ENCODE measurements at regions of chr4 and their contacts with region 1.

Region 1: GRCh38 chr4:1346781-1347409 is at the start of gene UVSSA:
- DNase-seq: peak; percentile 100
- ATAC-seq: peak; percentile 94
- H3K4me3 Mint-ChIP-seq: peak within 1 kb of the TSS; percentile 85
- H3K27ac Mint-ChIP-seq: peak within 1 kb of the TSS; percentile 97
- H3K4me1 Mint-ChIP-seq: peaks cover 44% of the 10 kb centered on the region
- H3K27me3 Mint-ChIP-seq: no peaks in the 10 kb centered on the region
- total RNA-seq, gene UVSSA: 16.7 to 17.0 TPM

Region 2: GRCh38 chr4:1137063-1137776 is 209.7 kb before region 1 on chr4:
- CTCF ChIA-PET with region 1: interaction called, 13 read pairs
- POLR2A ChIA-PET with region 1: interaction called, 5 read pairs
- DNase-seq: no peak
- ATAC-seq: peak; percentile 64
- H3K4me3 Mint-ChIP-seq: peak overlapping the region; percentile 68
- H3K27ac Mint-ChIP-seq: peak overlapping the region; percentile 78
- H3K4me1 Mint-ChIP-seq: peaks cover 23% of the 10 kb centered on the region
- H3K27me3 Mint-ChIP-seq: peaks cover 12% of the 10 kb centered on the region

Region 3: DNA sequence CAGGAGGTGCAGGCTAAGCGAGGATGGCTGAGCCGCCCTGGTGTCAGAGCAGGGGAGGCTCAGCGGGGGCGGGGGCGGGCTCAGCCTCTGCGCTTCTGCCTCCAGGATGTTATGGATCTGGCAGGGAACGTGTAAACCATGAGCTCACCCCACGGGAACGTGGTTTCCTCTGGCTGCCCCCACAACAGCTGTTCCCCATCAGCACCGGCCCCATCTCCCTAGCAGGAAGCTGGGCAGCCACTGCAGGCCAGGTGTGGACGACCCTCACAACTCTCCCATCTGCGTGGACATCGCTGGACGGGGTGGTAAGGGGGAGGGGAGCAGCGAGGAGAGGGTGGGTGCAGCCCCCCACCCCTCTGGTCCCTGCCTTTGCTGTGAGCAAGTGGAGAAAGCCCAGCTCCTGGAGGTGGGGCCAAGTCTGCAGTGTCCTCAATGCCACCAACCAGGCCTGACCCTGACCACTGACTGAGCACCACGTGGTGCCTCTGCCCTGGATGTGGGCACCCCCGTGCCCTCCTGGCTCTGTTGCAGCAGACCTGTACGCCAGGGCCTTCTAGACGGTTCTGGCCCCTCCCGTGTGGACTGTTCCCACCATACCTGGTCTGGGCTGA is 146.4 kb before region 1 on chr4:
- CTCF ChIA-PET with region 1: interaction called, 3 read pairs
- POLR2A ChIA-PET with region 1: interaction called, 10 read pairs
- DNase-seq: peak; percentile 54
- ATAC-seq: peak; percentile 2
- H3K4me3 Mint-ChIP-seq: peak overlapping the region; percentile 82
- H3K27ac Mint-ChIP-seq: peak overlapping the region; percentile 99
- H3K4me1 Mint-ChIP-seq: peaks cover 60% of the 10 kb centered on the region
- H3K27me3 Mint-ChIP-seq: no peaks in the 10 kb centered on the region

Region 4: GRCh38 chr4:1266881-1267763 is 79.8 kb before region 1 on chr4:
- CTCF ChIA-PET with region 1: interaction called, 15 read pairs
- POLR2A ChIA-PET with region 1: interaction called, 4 read pairs
- DNase-seq: no peak
- ATAC-seq: peak; percentile 79
- H3K4me3 Mint-ChIP-seq: peak overlapping the region; percentile 70
- H3K27ac Mint-ChIP-seq: peak overlapping the region; percentile 95
- H3K4me1 Mint-ChIP-seq: peaks cover 20% of the 10 kb centered on the region
- H3K27me3 Mint-ChIP-seq: no peaks in the 10 kb centered on the region

Region 5: GRCh38 chr4:1309261-1310010 is 37.5 kb before region 1 on chr4:
- CTCF ChIA-PET with region 1: interaction called, 10 read pairs
- POLR2A ChIA-PET with region 1: interaction called, 6 read pairs
- DNase-seq: peak; percentile 77
- ATAC-seq: peak; percentile 87
- H3K4me3 Mint-ChIP-seq: peak overlapping the region; percentile 47
- H3K27ac Mint-ChIP-seq: peak overlapping the region; percentile 75
- H3K4me1 Mint-ChIP-seq: peaks cover 63% of the 10 kb centered on the region
- H3K27me3 Mint-ChIP-seq: no peaks in the 10 kb centered on the region

Region 6: DNA sequence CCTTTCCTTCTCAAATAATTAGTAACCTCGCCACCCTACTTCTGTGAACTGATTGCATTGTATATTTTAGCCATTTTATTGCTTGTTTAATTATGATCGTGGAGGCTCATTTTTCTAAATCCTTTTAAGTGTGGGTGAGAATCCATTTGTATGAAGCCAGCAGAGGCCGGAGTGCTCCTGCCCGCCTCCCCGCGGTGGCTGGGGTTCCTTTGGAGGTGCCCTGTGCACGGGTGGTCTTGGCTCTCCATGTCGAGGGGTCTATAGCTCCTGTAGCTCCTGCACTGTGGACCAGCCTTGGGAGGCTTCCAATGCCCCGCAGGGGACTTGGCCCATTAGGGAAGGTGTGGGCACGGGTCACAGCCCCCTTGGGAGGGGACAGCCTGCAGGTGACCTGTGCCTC is 15.2 kb after region 1 on chr4:
- CTCF ChIA-PET with region 1: no interaction called
- POLR2A ChIA-PET with region 1: no interaction called
- DNase-seq: no peak
- ATAC-seq: no peak
- H3K4me3 Mint-ChIP-seq: no peak overlapping the region
- H3K27ac Mint-ChIP-seq: no peak overlapping the region
- H3K4me1 Mint-ChIP-seq: no peaks in the 10 kb centered on the region
- H3K27me3 Mint-ChIP-seq: no peaks in the 10 kb centered on the region

Measured in activated CD8-positive, alpha-beta T cell treated with anti-CD3 and anti-CD28 coated beads, Interleukin-2, amount 10 ng/mL, durations not matched to agents 7 days and 5 days (primary cell).